Tibial artery (tissue), 4 donors: ENCODE measurements at regions of chr9 and their contacts with region 1.

Region 1: DNA sequence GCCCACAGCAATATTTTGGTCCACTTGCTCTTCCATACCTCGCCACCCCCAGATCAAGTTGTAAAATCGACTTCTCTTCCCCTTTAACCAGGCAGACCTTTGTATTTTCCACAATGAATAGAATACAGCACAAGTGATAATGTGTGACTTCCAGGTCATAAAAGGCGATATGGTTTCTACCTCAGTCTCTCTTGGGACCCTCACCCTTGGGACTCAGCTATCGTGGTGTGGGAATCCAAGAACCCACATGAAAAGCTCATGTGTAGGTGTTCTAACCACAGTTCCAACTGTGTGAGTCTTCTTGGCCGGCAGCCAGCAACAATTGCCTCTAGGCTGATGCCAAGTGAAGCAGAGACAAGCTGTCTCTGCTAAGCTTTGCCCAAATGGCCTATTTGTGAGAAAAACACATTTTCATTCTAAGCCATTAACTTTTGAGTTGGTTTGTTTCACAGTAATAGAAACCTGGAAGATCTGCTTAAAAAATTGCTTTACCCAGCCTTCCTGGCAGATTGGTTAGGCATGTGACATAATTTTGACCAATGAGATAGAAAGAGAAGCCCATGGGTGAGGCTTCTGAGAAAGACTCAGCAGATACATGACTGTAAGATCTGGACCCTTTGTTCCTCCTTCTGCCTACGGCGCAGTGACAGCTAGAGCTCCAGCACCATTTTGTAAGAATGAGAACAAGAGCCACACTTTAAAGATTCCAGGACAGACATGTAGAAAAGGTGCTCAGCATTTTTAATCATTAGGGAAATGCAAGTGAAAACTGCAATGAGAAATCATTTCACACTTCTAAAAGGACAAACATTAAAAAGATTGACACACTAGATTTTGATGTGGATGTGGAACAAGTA is 18.3 kb upstream of the MLLT3 start:
- DNase-seq: no peak
- H3K4me3 ChIP-seq: no peak overlapping the region
- H3K27ac ChIP-seq: no peak overlapping the region
- H3K4me1 ChIP-seq: peaks cover 0 to 6% (median 0%) of the 10 kb centered on the region in 4 donors
- H3K27me3 ChIP-seq: no peaks in the 10 kb centered on the region
- CTCF ChIP-seq: no peak

Region 2: DNA sequence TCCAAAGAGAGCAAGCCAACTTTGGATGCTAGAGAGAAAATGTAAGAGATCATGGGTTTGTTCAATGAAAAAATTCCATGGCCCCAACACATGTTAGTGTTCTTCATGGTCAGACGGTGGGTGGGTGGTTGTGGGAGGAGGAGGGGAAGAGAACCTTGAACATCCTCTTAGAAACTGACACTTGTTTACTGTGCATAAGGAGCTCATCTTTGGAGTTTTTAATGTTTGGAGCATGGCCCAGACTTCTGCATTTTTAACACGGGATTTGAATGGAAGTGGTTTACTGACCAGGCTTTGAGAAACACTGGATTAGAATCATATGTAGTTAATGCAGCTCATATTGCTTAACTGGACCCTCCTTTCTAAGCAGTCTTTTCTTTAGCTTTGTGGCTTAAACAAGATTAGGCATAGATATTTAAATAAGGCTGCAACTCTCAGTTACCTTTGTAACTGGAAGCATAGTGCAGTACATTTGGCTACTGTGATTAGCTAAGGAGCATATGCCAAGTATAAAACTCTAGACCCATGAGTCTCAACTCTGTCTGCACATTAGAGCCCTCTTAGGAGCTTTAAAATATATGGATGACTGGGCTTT is 103.6 kb after region 1 on chr9:
- intact Hi-C with region 1: loop called (anchors 5 kb)
- DNase-seq: no peak
- H3K4me3 ChIP-seq: no peak overlapping the region
- H3K27ac ChIP-seq: no peak overlapping the region
- H3K4me1 ChIP-seq: peaks cover 0 to 1% (median 0%) of the 10 kb centered on the region in 4 donors
- H3K27me3 ChIP-seq: no peaks in the 10 kb centered on the region
- CTCF ChIP-seq: no peak